ENCODE measurements at regions of chr12 and their contacts with region 1.

Region 1: GRCh38 chr12:96489103-96490056 is at the start of gene CFAP54:
- DNase-seq: peak; percentile 91 to 97 (median 94)
- ATAC-seq: peak; percentile 96
- H3K4me3 ChIP-seq: peak within 1 kb of the TSS; percentile 71
- H3K4me3 Mint-ChIP-seq: peak within 1 kb of the TSS; percentile 77 to 93 (median 88)
- H3K27ac ChIP-seq: peak within 1 kb of the TSS; percentile 66
- H3K27ac Mint-ChIP-seq: peak within 1 kb of the TSS; percentile 68 to 96 (median 89)
- H3K4me1 ChIP-seq: peaks cover 7 to 12% of the 10 kb centered on the region in 2 donors
- H3K4me1 Mint-ChIP-seq: peaks cover 14 to 37% (median 22%) of the 10 kb centered on the region in 7 donors
- H3K27me3 ChIP-seq: no peaks in the 10 kb centered on the region
- H3K27me3 Mint-ChIP-seq: peaks cover 0 to 33% (median 0%) of the 10 kb centered on the region in 5 donors
- total RNA-seq, gene CFAP54: 0.22 to 0.93 (median 0.30) TPM

Region 2: DNA sequence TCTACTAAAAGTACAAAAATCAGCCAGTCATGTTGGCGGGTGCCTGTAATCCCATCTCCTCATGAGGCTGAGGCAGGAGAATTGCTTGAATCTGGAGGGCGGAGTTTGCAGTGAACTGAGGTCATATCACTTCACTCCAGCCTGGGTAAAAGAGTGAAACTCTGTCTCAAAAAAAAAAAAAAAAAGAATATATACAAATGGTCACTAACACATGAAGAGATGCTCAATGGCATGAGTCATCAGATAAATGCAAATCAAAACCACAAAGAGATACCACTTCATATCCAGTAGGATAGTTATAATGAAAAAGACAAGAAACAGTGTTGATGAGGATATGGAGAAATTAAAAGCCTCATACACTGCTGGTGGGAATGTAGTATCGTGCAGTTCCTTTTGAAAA is 1049.0 kb before region 1 on chr12:
- CTCF ChIA-PET with region 1: no interaction called
- POLR2A ChIA-PET with region 1: no interaction called
- intact Hi-C with region 1: no loop called
- DNase-seq: no peak
- ATAC-seq: no peak
- H3K4me3 ChIP-seq: no peak overlapping the region
- H3K4me3 Mint-ChIP-seq: no peak overlapping the region
- H3K27ac ChIP-seq: no peak overlapping the region
- H3K27ac Mint-ChIP-seq: no peak overlapping the region
- H3K4me1 ChIP-seq: no peaks in the 10 kb centered on the region
- H3K4me1 Mint-ChIP-seq: no peaks in the 10 kb centered on the region
- H3K27me3 ChIP-seq: no peaks in the 10 kb centered on the region
- H3K27me3 Mint-ChIP-seq: peaks cover 0 to 8% (median 4%) of the 10 kb centered on the region in 5 donors

Region 3: GRCh38 chr12:95858479-95859343 is 630.7 kb before region 1 on chr12 and contains the start of gene SNRPF:
- CTCF ChIA-PET with region 1: no interaction called
- POLR2A ChIA-PET with region 1: no interaction called
- intact Hi-C with region 1: loop called in 1 of 2 experiments (anchors 5 kb)
- DNase-seq: peak; percentile 88 to 96 (median 92)
- ATAC-seq: peak; percentile 98
- H3K4me3 ChIP-seq: peak within 1 kb of the TSS; percentile 82
- H3K4me3 Mint-ChIP-seq: no peak within 1 kb of the TSS
- H3K27ac ChIP-seq: peak within 1 kb of the TSS; percentile 86
- H3K27ac Mint-ChIP-seq: no peak within 1 kb of the TSS
- H3K4me1 ChIP-seq: peaks cover 11 to 12% of the 10 kb centered on the region in 2 donors
- H3K4me1 Mint-ChIP-seq: peaks cover 13 to 27% (median 16%) of the 10 kb centered on the region in 7 donors
- H3K27me3 ChIP-seq: no peaks in the 10 kb centered on the region
- H3K27me3 Mint-ChIP-seq: peaks cover 3 to 11% (median 7%) of the 10 kb centered on the region in 5 donors
- total RNA-seq, gene SNRPF: 19.0 to 40.4 (median 21.7) TPM

Region 4: DNA sequence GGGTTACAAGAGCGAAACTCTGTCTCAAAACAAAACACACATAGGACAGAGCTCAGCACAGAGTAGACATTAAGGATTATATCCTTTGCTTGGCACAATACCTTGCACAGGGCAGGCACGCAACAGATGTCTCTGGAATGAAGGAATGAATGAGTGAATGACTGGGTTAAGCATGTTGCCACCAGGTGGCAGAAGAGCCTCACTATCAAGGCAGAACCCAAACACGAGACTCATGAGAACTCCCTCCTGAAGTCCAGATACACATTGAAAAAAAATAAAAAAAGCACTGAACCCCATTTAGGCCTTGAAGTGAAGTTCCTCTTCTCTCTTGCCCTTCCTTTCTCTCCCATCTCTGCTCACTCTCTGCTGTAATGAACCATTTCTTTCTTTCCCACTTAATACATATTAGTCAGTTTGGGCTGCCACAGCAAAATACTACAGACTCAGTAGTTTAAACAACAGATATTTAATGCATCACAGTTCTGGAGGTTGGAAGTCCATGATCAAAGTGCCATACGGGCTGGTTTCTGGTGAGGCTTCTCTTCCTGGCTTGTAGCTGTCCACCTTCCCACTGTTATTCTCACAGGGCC is 427.4 kb before region 1 on chr12:
- CTCF ChIA-PET with region 1: interaction called, 3 read pairs
- POLR2A ChIA-PET with region 1: no interaction called
- intact Hi-C with region 1: loop called (anchors 1 kb)
- DNase-seq: peak; percentile 39 to 79 (median 70)
- ATAC-seq: peak; percentile 94
- H3K4me3 ChIP-seq: no peak overlapping the region
- H3K4me3 Mint-ChIP-seq: no peak overlapping the region
- H3K27ac ChIP-seq: no peak overlapping the region
- H3K27ac Mint-ChIP-seq: peak overlapping the region in 2 of 9 donors; percentile 1 to 28
- H3K4me1 ChIP-seq: peaks cover 0 to 12% of the 10 kb centered on the region in 2 donors
- H3K4me1 Mint-ChIP-seq: peaks cover 8 to 31% (median 30%) of the 10 kb centered on the region in 7 donors
- H3K27me3 ChIP-seq: no peaks in the 10 kb centered on the region
- H3K27me3 Mint-ChIP-seq: no peaks in the 10 kb centered on the region

Region 5: GRCh38 chr12:96375841-96376604 is 113.4 kb before region 1 on chr12:
- CTCF ChIA-PET with region 1: no interaction called
- POLR2A ChIA-PET with region 1: no interaction called
- intact Hi-C with region 1: loop called in 1 of 2 experiments (anchors 1 kb)
- DNase-seq: no peak
- ATAC-seq: no peak
- H3K4me3 ChIP-seq: no peak overlapping the region
- H3K4me3 Mint-ChIP-seq: peak overlapping the region; percentile 53 to 91 (median 64)
- H3K27ac ChIP-seq: peak overlapping the region; percentile 72
- H3K27ac Mint-ChIP-seq: peak overlapping the region in 8 of 9 donors; percentile 74 to 98 (median 96)
- H3K4me1 ChIP-seq: peaks cover 46 to 70% of the 10 kb centered on the region in 2 donors
- H3K4me1 Mint-ChIP-seq: peaks cover 59 to 94% (median 74%) of the 10 kb centered on the region in 7 donors
- H3K27me3 ChIP-seq: no peaks in the 10 kb centered on the region
- H3K27me3 Mint-ChIP-seq: no peaks in the 10 kb centered on the region

Region 6: DNA sequence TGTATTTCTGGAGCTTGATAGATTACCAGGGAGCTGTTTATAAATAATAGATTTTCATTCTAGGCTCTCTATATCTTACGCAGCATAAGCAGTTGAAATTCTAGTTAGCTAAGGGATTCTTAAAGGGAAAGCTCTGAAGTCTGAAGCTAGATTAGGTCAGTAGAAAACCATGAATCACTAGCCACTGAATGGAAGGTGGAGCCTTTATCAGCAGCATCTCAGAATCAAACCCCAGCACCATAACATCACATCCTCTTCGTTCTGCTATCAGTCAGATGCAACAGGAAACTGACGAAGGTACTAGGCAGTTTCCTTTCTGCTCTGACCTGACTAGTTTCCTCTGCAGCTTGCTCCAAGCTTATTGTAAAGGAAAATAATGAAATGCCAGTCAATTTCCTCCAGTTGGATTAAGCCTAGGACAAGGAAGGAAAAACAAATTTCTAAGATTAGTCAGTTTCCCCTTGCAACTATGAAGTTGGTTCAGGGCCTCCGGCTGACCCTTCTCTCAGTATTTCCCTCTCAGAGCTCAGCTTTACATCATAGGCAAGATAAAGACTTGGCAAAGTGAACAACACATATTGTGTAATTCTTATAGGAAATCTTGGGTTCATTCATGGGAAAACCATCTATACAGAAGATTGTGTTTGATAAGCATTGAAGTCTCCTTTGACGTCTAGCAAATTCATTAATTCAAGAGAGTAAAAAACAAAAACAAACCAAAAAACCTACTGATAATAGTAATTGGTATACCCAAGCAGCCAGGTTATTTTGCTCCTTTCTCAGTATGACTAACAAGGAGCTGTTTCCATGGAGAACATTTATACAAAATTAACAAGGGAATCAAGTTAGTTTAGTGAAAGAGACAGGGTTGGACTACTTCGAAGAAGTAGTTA is 43.4 kb before region 1 on chr12:
- CTCF ChIA-PET with region 1: interaction called, 7 read pairs
- POLR2A ChIA-PET with region 1: no interaction called
- intact Hi-C with region 1: loop called (anchors 1 kb)
- DNase-seq: peak in 8 of 9 donors; percentile 50 to 83 (median 78)
- ATAC-seq: peak; percentile 97
- H3K4me3 ChIP-seq: peak overlapping the region; percentile 10
- H3K4me3 Mint-ChIP-seq: peak overlapping the region; percentile 6 to 76 (median 63)
- H3K27ac ChIP-seq: peak overlapping the region; percentile 80
- H3K27ac Mint-ChIP-seq: peak overlapping the region; percentile 83 to 97 (median 92)
- H3K4me1 ChIP-seq: peaks cover 23 to 26% of the 10 kb centered on the region in 2 donors
- H3K4me1 Mint-ChIP-seq: peaks cover 17 to 55% (median 46%) of the 10 kb centered on the region in 7 donors
- H3K27me3 ChIP-seq: no peaks in the 10 kb centered on the region
- H3K27me3 Mint-ChIP-seq: no peaks in the 10 kb centered on the region